Transverse colon (tissue), 4 donors: ENCODE measurements at regions of chr1 and their contacts with region 1.

Region 1: GRCh38 chr1:74145086-74145485 is 52.9 kb downstream of the LRRIQ3 start:
- DNase-seq: no peak
- H3K4me3 ChIP-seq: no peak overlapping the region
- H3K27ac ChIP-seq: no peak overlapping the region
- H3K4me1 ChIP-seq: no peaks in the 10 kb centered on the region
- H3K27me3 ChIP-seq: no peaks in the 10 kb centered on the region
- CTCF ChIP-seq: no peak
- EP300 ChIP-seq: no peak
- POLR2A ChIP-seq: no peak

Region 2: DNA sequence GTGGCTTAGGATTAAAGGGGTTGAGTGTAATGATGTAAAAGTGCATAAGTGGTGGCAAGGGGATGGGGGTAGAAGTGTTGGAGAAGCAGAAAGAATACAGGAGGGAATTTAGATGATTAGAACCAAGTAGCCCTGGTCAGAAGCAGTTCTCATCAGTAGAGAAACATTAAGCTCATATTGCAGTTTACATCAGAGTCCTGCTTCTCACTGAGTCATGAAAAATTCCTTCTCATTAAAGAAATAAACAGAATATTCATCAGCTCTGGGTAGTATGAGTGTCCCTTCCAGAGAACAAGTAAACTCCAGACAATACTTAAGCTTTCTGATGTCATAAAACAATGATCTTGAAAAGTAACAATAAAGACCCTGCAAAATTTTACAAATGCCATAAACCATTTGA is 16.4 kb after region 1 on chr1:
- in situ Hi-C with region 1: no loop called
- intact Hi-C with region 1: loop called (anchors 1 kb)
- DNase-seq: no peak
- H3K4me3 ChIP-seq: no peak overlapping the region
- H3K27ac ChIP-seq: no peak overlapping the region
- H3K4me1 ChIP-seq: no peaks in the 10 kb centered on the region
- H3K27me3 ChIP-seq: no peaks in the 10 kb centered on the region
- CTCF ChIP-seq: no peak
- EP300 ChIP-seq: no peak
- POLR2A ChIP-seq: no peak

Region 3: GRCh38 chr1:75712306-75712705 is 1567.2 kb after region 1 on chr1:
- in situ Hi-C with region 1: no loop called
- intact Hi-C with region 1: no loop called
- DNase-seq: no peak
- H3K4me3 ChIP-seq: no peak overlapping the region
- H3K27ac ChIP-seq: no peak overlapping the region
- H3K4me1 ChIP-seq: no peaks in the 10 kb centered on the region
- H3K27me3 ChIP-seq: no peaks in the 10 kb centered on the region
- CTCF ChIP-seq: no peak
- EP300 ChIP-seq: no peak
- POLR2A ChIP-seq: no peak